CD4-positive, alpha-beta memory T cell (primary cell): ENCODE measurements at regions of chr11 and their contacts with region 1.

Region 1: GRCh38 chr11:9280655-9281301 is 15.6 kb upstream of the DENND5A start:
- DNase-seq: peak; percentile 61 to 73 (median 68)
- H3K4me3 ChIP-seq: no peak overlapping the region
- H3K4me3 Mint-ChIP-seq: peak overlapping the region; percentile 43 to 72 (median 58)
- H3K27ac ChIP-seq: no peak overlapping the region
- H3K27ac Mint-ChIP-seq: peak overlapping the region; percentile 3 to 63 (median 36)
- H3K4me1 ChIP-seq: peaks cover 17% of the 10 kb centered on the region
- H3K4me1 Mint-ChIP-seq: peaks cover 9 to 19% (median 14%) of the 10 kb centered on the region in 4 donors
- H3K27me3 ChIP-seq: no peaks in the 10 kb centered on the region
- H3K27me3 Mint-ChIP-seq: no peaks in the 10 kb centered on the region

Region 2: DNA sequence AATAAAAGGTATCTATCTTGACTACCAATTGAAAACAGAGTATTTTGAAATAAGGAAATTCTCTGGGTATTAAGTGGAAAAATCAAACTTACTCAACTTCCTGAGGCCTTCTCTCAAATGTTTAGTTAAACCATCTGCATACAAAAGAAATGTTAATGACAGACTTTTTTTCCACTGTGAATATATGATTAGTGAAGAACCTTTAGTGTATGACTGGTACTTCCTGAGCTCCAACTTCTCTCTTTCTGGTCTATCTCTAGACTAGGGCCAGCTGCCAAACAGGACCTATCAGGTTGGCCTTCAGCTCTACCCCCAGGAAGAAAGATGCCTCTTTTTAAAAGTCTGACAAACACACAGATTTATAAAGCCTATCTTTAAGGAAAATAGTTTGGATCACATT is 120.6 kb before region 1 on chr11:
- CTCF ChIA-PET with region 1: no interaction called
- POLR2A ChIA-PET with region 1: no interaction called
- intact Hi-C with region 1: loop called (anchors 10 kb)
- DNase-seq: no peak
- H3K4me3 ChIP-seq: no peak overlapping the region
- H3K4me3 Mint-ChIP-seq: no peak overlapping the region
- H3K27ac ChIP-seq: no peak overlapping the region
- H3K27ac Mint-ChIP-seq: peak overlapping the region in 3 of 7 donors; percentile 5 to 85 (median 30)
- H3K4me1 ChIP-seq: no peaks in the 10 kb centered on the region
- H3K4me1 Mint-ChIP-seq: peaks cover 1 to 13% (median 9%) of the 10 kb centered on the region in 4 donors
- H3K27me3 ChIP-seq: no peaks in the 10 kb centered on the region
- H3K27me3 Mint-ChIP-seq: no peaks in the 10 kb centered on the region

Region 3: DNA sequence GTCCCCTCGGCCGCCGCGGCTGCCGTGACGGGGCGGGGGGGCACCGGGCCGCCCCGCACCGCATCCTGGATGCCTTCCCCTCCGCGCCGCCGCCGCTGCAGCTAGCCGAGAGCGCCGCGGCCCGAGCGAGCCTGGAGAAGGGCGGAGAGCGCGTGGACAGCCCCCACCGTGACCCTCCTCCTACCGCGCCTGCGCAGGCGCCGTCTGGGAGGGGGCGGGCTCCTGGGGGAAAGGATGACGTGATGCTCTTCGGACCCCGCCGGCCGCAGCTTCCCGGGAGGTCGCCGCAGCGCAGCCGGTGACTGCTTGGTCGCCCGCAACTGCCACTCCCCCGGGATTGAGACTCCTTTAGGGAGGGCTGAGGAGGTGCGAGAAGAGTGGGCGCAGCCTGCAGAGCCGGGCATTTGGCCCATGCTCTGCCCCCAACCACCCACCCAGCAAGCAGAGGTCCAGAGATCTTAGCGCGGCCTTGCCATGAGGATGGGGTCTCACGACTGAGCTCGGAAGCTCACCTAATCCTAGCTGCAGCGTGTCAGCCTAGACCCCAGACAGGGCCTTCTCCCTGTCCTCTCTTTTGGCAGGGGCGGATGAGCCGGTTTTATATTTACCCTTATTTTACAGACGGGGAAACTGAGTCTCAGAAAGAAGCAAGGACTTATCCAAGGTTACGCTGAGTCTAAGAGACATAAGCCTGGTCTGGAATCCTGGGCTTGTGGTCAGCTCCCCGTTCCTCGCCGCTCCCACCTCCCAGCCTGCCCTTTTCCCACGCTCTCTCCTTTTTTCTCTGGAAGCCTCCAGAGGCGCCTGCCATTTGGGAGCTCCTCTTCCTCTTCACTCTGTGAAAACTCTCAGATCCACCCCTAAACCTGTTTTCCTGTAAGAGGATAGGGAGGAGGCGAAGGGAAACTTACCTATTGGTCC is 15.3 kb before region 1 on chr11 and contains the start of gene DENND5A:
- CTCF ChIA-PET with region 1: interaction called, 3 read pairs
- POLR2A ChIA-PET with region 1: interaction called, 49 read pairs
- intact Hi-C with region 1: loop called (anchors 2 kb)
- DNase-seq: peak; percentile 32 to 51 (median 35)
- H3K4me3 ChIP-seq: peak within 1 kb of the TSS; percentile 68 to 76
- H3K4me3 Mint-ChIP-seq: peak within 1 kb of the TSS; percentile 90 to 99 (median 97)
- H3K27ac ChIP-seq: peak within 1 kb of the TSS; percentile 48
- H3K27ac Mint-ChIP-seq: peak within 1 kb of the TSS; percentile 92 to 97 (median 95)
- H3K4me1 ChIP-seq: peaks cover 33% of the 10 kb centered on the region
- H3K4me1 Mint-ChIP-seq: peaks cover 25 to 39% (median 31%) of the 10 kb centered on the region in 4 donors
- H3K27me3 ChIP-seq: no peaks in the 10 kb centered on the region
- H3K27me3 Mint-ChIP-seq: peaks cover 0 to 2% of the 10 kb centered on the region in 2 donors
- total RNA-seq, gene DENND5A: 58.6 to 61.9 TPM